CD4-positive, alpha-beta T cell (primary cell): ENCODE measurements at regions of chr2 and their contacts with region 1.

Region 1: DNA sequence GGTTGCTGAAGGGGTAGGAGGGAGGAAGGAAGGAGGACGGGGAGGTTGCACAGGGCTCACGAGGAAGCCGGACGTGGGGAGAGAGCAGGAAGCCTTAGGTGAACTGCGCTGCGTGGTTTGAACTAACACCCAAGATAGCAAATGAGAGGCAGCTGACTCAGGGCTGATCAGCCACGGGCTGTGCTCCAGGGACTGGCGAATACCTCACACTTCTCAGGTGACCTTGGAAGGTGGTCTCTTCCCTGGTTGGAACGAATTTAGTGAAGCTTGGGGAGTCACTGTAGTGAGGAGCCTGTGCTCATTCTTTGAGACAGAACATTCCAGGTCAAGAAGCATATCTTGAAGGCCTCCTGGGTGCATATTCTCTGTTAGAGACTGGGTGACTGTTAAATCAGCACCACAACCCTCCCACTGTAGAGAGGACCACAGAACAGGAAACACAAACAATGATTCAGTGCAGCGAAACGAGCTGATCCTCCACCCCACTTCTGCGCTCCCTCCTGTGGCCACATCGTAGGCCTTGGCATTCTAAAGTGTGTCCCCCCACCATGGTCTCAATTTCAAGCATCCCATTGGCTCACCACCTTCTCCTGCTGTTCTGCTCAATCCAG is 33.8 kb downstream of the TOGARAM2 start:
- DNase-seq: peak; percentile 57 to 90 (median 72)
- ATAC-seq: peak; percentile 66
- H3K4me3 ChIP-seq: peak overlapping the region; percentile 37
- H3K4me3 Mint-ChIP-seq: peak overlapping the region; percentile 82
- H3K27ac ChIP-seq: peak overlapping the region; percentile 81 to 86
- H3K27ac Mint-ChIP-seq: peak overlapping the region; percentile 99
- H3K4me1 ChIP-seq: peaks cover 84% of the 10 kb centered on the region
- H3K4me1 Mint-ChIP-seq: peaks cover 73% of the 10 kb centered on the region
- H3K27me3 ChIP-seq: no peaks in the 10 kb centered on the region
- H3K27me3 Mint-ChIP-seq: no peaks in the 10 kb centered on the region
- CTCF ChIP-seq: peak; percentile 34

Region 2: DNA sequence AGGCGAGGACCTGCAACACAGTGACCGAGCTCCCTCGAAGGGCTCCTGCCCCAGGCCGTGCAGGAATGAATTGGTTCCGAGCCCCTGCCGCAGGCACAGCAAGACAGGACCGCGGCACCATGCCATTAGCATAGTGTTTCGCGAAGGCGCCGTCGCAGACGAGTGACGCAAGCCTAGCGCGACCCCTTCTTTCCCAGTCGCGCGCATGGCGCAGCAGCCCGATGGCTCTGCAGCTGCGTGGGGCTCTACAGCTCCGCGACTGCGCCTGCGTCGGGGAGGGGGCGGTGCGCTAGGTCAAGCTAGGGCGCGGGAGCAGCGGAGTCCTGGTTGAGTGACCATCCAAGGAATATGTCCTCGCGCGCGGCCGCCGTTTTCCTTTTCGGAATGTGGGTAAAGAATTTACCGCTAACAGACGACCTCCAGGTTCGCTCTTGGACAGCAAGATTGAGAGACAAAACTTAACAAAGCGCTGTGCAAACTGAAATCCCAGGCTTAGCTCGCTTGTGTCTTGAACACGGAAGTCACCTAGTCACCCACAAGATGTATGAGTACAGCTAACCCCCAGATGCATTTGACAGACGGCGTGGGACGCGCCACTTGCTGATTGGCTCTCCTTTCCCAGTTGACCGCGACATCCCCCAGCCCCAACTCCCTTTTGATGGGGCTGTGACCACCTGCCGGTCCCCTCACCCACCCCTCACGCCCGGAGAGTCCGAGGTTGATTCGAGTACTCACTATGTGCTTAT is 144.6 kb before region 1 on chr2 and contains the start of gene TRMT61B:
- CTCF ChIA-PET with region 1: no interaction called
- POLR2A ChIA-PET with region 1: interaction called, 15 read pairs
- intact Hi-C with region 1: no loop called
- DNase-seq: peak; percentile 92 to 99 (median 97)
- ATAC-seq: peak; percentile 92
- H3K4me3 ChIP-seq: peak within 1 kb of the TSS; percentile 88
- H3K4me3 Mint-ChIP-seq: peak within 1 kb of the TSS; percentile 99
- H3K27ac ChIP-seq: peak within 1 kb of the TSS; percentile 82 to 93
- H3K27ac Mint-ChIP-seq: peak within 1 kb of the TSS; percentile 99
- H3K4me1 ChIP-seq: peaks cover 41% of the 10 kb centered on the region
- H3K4me1 Mint-ChIP-seq: peaks cover 37% of the 10 kb centered on the region
- H3K27me3 ChIP-seq: no peaks in the 10 kb centered on the region
- H3K27me3 Mint-ChIP-seq: peaks cover 7% of the 10 kb centered on the region
- CTCF ChIP-seq: no peak
- total RNA-seq, gene TRMT61B: 18.7 to 20.8 TPM

Region 3: DNA sequence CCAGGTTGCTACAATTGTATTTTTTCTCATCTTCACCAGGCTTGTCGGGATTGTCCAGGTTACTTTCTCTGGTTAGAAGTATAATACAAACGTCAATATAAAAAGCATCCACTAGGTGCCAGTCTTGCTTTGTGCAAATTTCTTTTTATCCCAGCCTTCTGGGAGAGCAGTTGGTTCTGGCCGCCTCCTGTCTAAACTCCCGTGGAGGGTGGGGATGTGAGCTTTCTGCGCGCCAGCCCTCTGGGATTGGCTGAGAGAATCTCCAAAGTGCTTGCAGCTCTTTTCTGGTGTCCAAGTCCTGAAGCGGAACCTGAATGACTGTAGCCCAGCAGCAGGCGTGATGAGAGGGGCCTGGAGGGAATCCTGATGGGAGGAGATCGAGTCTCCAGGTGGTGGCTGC is 56.2 kb before region 1 on chr2:
- CTCF ChIA-PET with region 1: interaction called, 6 read pairs
- POLR2A ChIA-PET with region 1: interaction called, 8 read pairs
- intact Hi-C with region 1: loop called (anchors 1 to 2 kb)
- DNase-seq: peak in 11 of 14 experiments; percentile 4 to 76 (median 15)
- ATAC-seq: peak; percentile 82
- H3K4me3 ChIP-seq: no peak overlapping the region
- H3K4me3 Mint-ChIP-seq: no peak overlapping the region
- H3K27ac ChIP-seq: no peak overlapping the region
- H3K27ac Mint-ChIP-seq: no peak overlapping the region
- H3K4me1 ChIP-seq: peaks cover 9% of the 10 kb centered on the region
- H3K4me1 Mint-ChIP-seq: peaks cover 4% of the 10 kb centered on the region
- H3K27me3 ChIP-seq: no peaks in the 10 kb centered on the region
- H3K27me3 Mint-ChIP-seq: no peaks in the 10 kb centered on the region
- CTCF ChIP-seq: peak; percentile 82

Region 4: GRCh38 chr2:29115797-29116781 is 101.2 kb after region 1 on chr2:
- CTCF ChIA-PET with region 1: interaction called, 5 read pairs
- POLR2A ChIA-PET with region 1: interaction called, 68 read pairs
- intact Hi-C with region 1: loop called (anchors 1 to 5 kb)
- DNase-seq: peak; percentile 46 to 88 (median 61)
- ATAC-seq: peak; percentile 72
- H3K4me3 ChIP-seq: peak overlapping the region; percentile 85
- H3K4me3 Mint-ChIP-seq: peak overlapping the region; percentile 97
- H3K27ac ChIP-seq: peak overlapping the region; percentile 75 to 88
- H3K27ac Mint-ChIP-seq: peak overlapping the region; percentile 100
- H3K4me1 ChIP-seq: peaks cover 23% of the 10 kb centered on the region
- H3K4me1 Mint-ChIP-seq: peaks cover 51% of the 10 kb centered on the region
- H3K27me3 ChIP-seq: no peaks in the 10 kb centered on the region
- H3K27me3 Mint-ChIP-seq: no peaks in the 10 kb centered on the region
- CTCF ChIP-seq: no peak

Region 5: GRCh38 chr2:29281086-29281915 is 266.4 kb after region 1 on chr2:
- CTCF ChIA-PET with region 1: no interaction called
- POLR2A ChIA-PET with region 1: no interaction called
- intact Hi-C with region 1: no loop called
- DNase-seq: no peak
- ATAC-seq: no peak
- H3K4me3 ChIP-seq: no peak overlapping the region
- H3K4me3 Mint-ChIP-seq: no peak overlapping the region
- H3K27ac ChIP-seq: no peak overlapping the region
- H3K27ac Mint-ChIP-seq: no peak overlapping the region
- H3K4me1 ChIP-seq: no peaks in the 10 kb centered on the region
- H3K4me1 Mint-ChIP-seq: no peaks in the 10 kb centered on the region
- H3K27me3 ChIP-seq: peaks cover 0 to 3% of the 10 kb centered on the region in 2 experiments
- H3K27me3 Mint-ChIP-seq: peaks cover 37% of the 10 kb centered on the region
- CTCF ChIP-seq: no peak